Adrenal gland (tissue), 19 donors: ENCODE measurements at regions of chr5 and their contacts with region 1.

Region 1: GRCh38 chr5:132979367-132979940 is 16.0 kb upstream of the AFF4 start:
- DNase-seq: no peak
- H3K4me3 ChIP-seq: no peak overlapping the region
- H3K27ac ChIP-seq: no peak overlapping the region
- H3K4me1 ChIP-seq: no peaks in the 10 kb centered on the region
- H3K27me3 ChIP-seq: no peaks in the 10 kb centered on the region
- CTCF ChIP-seq: no peak
- POLR2A ChIP-seq: no peak

Region 2: GRCh38 chr5:132238169-132238744 is 741.2 kb before region 1 on chr5:
- intact Hi-C with region 1: no loop called
- DNase-seq: peak; percentile 56 to 92 (median 75)
- H3K4me3 ChIP-seq: no peak overlapping the region
- H3K27ac ChIP-seq: no peak overlapping the region
- H3K4me1 ChIP-seq: no peaks in the 10 kb centered on the region
- H3K27me3 ChIP-seq: no peaks in the 10 kb centered on the region
- CTCF ChIP-seq: peak; percentile 44 to 84 (median 78)
- POLR2A ChIP-seq: no peak

Region 3: DNA sequence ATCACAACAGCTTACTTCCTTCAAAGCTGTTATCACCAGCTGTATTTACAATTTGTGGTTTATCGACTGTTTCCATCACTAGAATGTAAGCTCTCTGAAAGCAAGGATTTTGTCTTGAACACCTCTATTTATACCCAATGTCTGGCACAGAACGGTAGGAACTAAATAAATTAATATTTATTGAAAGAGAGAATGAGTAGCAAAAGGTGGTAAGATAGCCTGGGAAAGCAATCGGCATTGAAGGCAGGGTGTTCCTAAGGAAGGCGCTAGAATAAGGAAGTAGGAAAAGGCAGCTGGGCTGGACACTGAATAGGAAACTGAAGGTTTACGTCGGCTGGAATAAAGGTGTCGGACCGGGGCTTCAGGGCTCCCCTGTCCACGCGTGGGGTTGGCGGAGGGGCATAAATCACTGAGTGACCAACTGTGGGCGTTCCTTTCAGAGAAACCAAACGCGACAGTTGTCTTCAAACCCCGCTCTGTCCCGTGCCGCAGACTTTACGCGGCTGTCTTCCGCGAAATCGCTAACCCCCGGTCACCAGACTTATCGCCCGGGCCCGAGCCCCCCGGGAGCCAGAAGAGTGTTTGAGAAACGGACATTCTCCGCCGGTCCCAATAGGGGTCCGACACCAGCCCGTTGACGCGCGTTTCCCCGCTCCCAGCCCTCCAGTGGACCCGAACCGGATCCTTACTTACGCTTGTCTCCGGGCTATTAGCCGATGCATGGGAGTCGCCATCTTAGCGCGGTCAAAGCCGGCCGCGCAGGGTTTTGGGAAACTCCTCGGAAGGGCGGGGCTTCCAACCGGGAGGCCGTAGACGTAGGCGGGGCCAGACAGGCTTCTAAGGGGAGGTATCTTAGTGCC is 46.6 kb after region 1 on chr5 and contains the start of gene ZCCHC10:
- intact Hi-C with region 1: loop called in 1 of 2 experiments (anchors 10 kb)
- DNase-seq: peak; percentile 92 to 96 (median 93)
- H3K4me3 ChIP-seq: peak within 1 kb of the TSS; percentile 28 to 98 (median 82)
- H3K27ac ChIP-seq: peak within 1 kb of the TSS; percentile 88 to 98 (median 95)
- H3K4me1 ChIP-seq: peaks cover 10 to 14% of the 10 kb centered on the region in 2 donors
- H3K27me3 ChIP-seq: no peaks in the 10 kb centered on the region
- CTCF ChIP-seq: no peak
- POLR2A ChIP-seq: peak; percentile 58 to 78
- total RNA-seq, gene ZCCHC10: 8.3 to 39.3 (median 18.2) TPM